Calu3 (cell line): ENCODE measurements at regions of chr19 and their contacts with region 1.

Region 1: DNA sequence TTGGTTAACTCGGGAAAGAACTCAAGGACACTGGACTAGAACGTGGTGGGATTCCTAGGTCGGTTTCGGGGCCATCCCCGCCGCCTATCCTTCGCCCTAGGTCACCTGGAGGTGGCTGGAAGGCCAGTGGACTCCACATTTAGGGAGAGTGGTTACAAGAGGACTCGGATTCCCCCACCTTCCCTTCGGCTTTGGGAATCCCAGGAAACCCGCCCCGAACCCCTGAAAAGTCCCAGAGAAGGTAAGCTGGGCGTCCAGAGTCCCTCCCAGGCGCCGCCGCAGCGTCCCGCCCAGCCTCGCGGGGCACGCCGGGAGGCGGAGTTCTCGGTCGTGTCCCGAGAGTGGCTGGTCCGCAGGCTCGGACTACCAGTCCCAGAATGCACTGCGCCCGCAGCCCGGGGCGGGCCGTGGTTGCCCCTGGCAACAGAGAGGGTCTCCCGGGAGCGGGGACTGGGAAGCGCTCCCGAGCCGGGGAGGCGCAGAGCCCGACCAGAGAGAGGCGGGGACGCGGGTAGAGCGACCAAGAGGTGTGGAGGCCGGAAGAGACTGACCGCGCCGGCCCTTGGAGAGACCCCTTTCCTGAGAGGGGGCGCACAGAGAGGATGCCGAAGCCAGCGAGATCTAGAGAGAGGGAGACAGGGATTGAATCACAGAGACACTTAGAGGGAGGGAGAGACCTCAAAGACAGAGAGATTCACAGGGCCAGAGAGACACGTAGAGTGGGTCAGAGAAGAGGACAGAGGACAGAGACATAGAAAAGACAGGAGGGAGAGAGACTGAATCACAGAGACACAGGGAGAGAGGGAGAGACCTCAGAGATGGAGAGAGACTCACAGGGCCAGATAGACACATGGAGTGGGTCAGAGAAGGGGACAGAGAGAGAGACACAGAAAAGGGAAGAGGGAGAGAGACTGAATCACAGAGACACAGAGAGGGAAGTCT is 2.6 kb upstream of the PRKCG start:
- DNase-seq: peak; percentile 99
- H3K4me3 Mint-ChIP-seq: no peak overlapping the region
- H3K27ac Mint-ChIP-seq: no peak overlapping the region
- H3K4me1 Mint-ChIP-seq: peaks cover 31% of the 10 kb centered on the region
- H3K27me3 Mint-ChIP-seq: no peaks in the 10 kb centered on the region
- CTCF ChIP-seq: no peak

Region 2: GRCh38 chr19:53844849-53845246 is 34.6 kb before region 1 on chr19:
- CTCF ChIA-PET with region 1: interaction called, 3 read pairs
- intact Hi-C with region 1: loop called (anchors 1 kb)
- DNase-seq: no peak
- H3K4me3 Mint-ChIP-seq: no peak overlapping the region
- H3K27ac Mint-ChIP-seq: no peak overlapping the region
- H3K4me1 Mint-ChIP-seq: peaks cover 15% of the 10 kb centered on the region
- H3K27me3 Mint-ChIP-seq: no peaks in the 10 kb centered on the region
- CTCF ChIP-seq: no peak

Region 3: DNA sequence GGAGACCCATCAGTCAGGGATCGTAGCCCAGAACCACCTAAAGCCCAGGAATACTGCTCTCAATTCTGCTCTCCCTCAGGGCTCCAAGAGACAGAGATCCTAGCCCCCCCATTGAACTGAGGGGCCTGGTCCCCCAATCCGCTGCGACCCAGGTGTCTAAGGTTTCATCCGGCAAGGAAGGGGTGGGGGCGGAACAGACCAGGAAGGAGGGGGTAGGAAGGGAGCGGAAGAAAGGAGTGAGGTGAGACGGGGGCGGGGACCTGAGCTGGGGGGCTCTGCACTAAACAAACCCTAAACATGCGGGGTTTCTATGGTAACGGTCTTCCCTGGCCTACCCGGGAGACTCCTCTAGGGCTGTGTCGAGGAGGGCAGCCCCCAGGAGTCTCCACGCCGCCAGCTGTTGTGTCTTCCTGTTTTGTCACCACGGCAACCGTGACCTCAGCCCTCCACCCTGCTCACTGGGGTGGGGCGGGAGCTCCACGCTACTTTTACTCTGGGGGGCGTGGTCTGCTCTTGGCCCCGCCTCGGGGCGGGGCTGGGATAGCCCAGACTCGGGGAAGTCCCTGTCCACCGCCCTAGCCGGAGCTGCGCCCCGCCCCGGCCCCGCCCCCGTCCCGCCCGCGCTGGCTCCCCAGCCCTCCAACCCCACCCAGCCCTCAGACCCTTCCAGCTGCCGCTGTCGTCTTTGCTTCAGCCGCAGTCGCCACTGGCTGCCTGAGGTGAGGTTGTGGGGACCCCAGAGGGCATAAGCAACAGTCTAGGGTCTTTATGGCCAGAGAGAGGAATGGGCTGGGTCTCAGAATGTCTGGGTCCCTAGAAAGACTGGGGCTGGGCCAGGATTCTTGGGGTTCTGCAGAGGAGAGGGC is 12.0 kb before region 1 on chr19 and contains the start of gene MYADM:
- CTCF ChIA-PET with region 1: interaction called, 10 read pairs
- intact Hi-C with region 1: no loop called
- DNase-seq: peak; percentile 100
- H3K4me3 Mint-ChIP-seq: peak within 1 kb of the TSS; percentile 95
- H3K27ac Mint-ChIP-seq: peak within 1 kb of the TSS; percentile 99
- H3K4me1 Mint-ChIP-seq: peaks cover 56% of the 10 kb centered on the region
- H3K27me3 Mint-ChIP-seq: no peaks in the 10 kb centered on the region
- CTCF ChIP-seq: no peak
- total RNA-seq, gene MYADM: 366 and 464 TPM in 2 replicates

Region 4: GRCh38 chr19:53912653-53913052 is 33.2 kb after region 1 on chr19:
- CTCF ChIA-PET with region 1: no interaction called
- intact Hi-C with region 1: no loop called
- DNase-seq: no peak
- H3K4me3 Mint-ChIP-seq: no peak overlapping the region
- H3K27ac Mint-ChIP-seq: no peak overlapping the region
- H3K4me1 Mint-ChIP-seq: peaks cover 23% of the 10 kb centered on the region
- H3K27me3 Mint-ChIP-seq: peaks cover 57% of the 10 kb centered on the region
- CTCF ChIP-seq: peak; percentile 37

Region 5: DNA sequence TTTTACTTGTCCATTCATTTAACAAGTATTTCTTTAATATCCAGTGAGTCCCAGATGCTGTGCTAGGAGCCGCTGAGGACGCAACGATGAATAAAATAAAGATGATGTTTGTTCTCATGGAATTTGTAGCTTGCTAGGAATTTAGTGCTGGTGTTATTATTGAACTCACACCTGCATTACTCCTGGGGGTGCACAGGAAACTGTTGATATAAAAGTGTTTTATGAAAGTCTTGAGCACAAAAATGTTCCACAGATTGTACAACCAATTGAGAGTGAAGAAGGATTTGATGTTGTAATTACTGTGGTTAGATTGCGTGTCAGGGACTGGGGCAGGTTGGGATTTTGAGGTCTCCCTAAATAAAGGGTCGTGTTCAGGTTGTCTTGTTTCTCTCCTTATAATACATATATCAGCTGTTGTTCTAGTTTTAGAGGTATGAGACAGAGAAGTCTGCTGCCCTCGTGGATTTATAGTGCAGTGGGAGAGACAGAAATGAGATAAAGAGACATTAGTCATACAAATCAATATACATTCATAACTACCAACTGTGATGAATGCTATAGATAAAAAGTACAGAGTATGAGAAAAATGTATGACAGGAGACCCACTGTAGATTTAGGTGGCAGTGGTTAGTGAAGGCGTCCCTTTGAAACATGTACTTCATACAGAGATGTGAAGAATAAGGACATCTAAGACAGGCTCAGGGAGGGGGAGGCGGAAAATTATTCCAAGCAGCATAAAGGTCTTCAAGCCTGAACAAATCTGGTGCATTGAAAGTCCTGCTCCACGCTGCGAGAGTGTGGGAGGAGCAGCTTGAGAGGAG is 123.3 kb after region 1 on chr19:
- CTCF ChIA-PET with region 1: interaction called, 10 read pairs
- intact Hi-C with region 1: no loop called
- DNase-seq: peak; percentile 73
- H3K4me3 Mint-ChIP-seq: peak overlapping the region; percentile 20
- H3K27ac Mint-ChIP-seq: peak overlapping the region; percentile 88
- H3K4me1 Mint-ChIP-seq: peaks cover 51% of the 10 kb centered on the region
- H3K27me3 Mint-ChIP-seq: no peaks in the 10 kb centered on the region
- CTCF ChIP-seq: no peak

Region 6: DNA sequence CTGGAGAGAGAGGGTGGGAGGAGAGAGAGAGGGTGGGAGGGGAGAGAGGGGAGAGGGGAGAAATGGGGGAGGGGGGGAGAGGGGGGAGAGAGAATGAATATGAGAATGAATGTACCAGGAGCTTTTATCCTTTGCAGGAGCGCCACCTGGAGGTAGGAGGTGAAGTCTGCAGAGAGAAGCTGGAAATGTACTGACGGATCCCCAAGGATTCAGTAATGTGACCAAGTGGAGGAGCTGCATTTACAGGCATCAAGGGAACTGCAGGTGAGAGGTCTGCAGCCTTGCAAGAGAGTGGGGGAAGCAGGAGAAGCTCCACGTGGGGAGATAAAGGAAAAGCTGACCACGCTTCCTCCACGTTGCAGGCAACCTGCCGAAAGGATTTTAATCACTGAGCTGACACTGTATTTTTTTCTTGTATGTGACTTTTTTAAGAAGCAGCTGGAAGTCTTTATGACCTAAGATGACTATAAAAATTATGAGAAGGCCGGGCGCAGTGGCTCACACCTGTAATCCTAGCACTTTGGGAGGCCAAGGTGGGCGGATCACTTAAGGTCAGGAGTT is 150.6 kb after region 1 on chr19:
- CTCF ChIA-PET with region 1: interaction called, 29 read pairs
- intact Hi-C with region 1: no loop called
- DNase-seq: peak; percentile 83
- H3K4me3 Mint-ChIP-seq: no peak overlapping the region
- H3K27ac Mint-ChIP-seq: no peak overlapping the region
- H3K4me1 Mint-ChIP-seq: peaks cover 21% of the 10 kb centered on the region
- H3K27me3 Mint-ChIP-seq: no peaks in the 10 kb centered on the region
- CTCF ChIP-seq: peak; percentile 83